ENCODE measurements at regions of chr2 and their contacts with region 1.

Region 1: GRCh38 chr2:223537669-223538601 is 64.2 kb downstream of the SCG2 start:
- DNase-seq: peak; percentile 40 to 68
- H3K4me3 ChIP-seq: no peak overlapping the region
- H3K27ac ChIP-seq: peak overlapping the region; percentile 60
- H3K4me1 ChIP-seq: peaks cover 19% of the 10 kb centered on the region
- H3K27me3 ChIP-seq: no peaks in the 10 kb centered on the region
- CTCF ChIP-seq: no peak

Region 2: GRCh38 chr2:222903234-222904220 is 634.4 kb before region 1 on chr2:
- CTCF ChIA-PET with region 1: no interaction called
- POLR2A ChIA-PET with region 1: interaction called, 11 read pairs
- intact Hi-C with region 1: no loop called
- DNase-seq: peak; percentile 48 to 68
- H3K4me3 ChIP-seq: no peak overlapping the region
- H3K27ac ChIP-seq: 0 out of 2 replicates have a peak overlapping the region, but pooled peaks have one; percentile 7
- H3K4me1 ChIP-seq: peaks cover 29% of the 10 kb centered on the region
- H3K27me3 ChIP-seq: no peaks in the 10 kb centered on the region
- CTCF ChIP-seq: peak; percentile 99

Region 3: DNA sequence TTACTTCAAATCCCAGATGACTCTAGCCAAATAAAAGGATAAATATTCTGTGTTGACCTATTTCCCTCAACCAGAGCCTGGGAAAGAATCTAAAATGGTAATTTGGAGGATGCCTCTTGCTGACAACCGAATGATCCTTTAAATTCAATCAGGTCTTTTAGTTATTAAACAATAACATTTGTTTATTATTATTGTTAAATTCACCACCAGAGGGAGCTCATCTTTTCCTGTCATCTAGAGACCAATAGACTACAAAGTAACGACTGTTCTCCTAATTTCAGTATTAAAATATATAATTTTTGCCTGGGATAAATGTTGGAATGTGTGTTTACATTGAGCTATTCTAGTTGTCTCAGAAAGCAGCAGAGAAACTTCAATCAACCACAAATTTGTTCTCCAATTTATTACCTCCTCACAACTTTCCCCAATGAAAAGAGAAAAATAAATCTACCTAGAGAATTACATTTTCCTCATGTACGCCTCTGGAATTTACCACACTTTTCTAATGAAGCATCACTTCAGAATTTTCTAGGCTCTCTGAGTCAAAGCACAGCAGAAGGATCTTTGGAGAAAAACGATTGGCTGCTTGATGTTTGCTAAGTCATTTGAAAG is 78.5 kb before region 1 on chr2:
- CTCF ChIA-PET with region 1: interaction called, 13 read pairs
- POLR2A ChIA-PET with region 1: interaction called, 3 read pairs
- intact Hi-C with region 1: no loop called
- DNase-seq: no peak
- H3K4me3 ChIP-seq: no peak overlapping the region
- H3K27ac ChIP-seq: no peak overlapping the region
- H3K4me1 ChIP-seq: peaks cover 21% of the 10 kb centered on the region
- H3K27me3 ChIP-seq: no peaks in the 10 kb centered on the region
- CTCF ChIP-seq: peak; percentile 75

Region 4: DNA sequence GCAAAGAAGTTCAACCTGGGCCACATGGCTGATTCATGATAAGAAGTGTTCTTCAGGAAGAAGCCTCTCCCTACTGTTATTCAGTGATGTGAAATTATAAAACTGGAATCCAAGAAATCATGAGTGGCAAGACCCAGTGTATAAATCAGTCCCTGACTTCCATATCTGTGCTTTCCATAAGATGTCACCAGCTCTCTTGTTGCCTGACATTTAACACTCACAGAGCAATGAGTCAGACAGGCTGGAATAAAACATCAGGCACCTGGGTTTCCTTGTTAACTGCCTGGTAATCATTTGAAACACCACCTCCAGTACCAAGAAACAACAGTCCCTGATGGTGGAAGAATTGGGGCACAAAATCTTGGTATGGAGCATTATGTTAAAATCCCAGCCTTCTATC is 11.8 kb before region 1 on chr2:
- CTCF ChIA-PET with region 1: no interaction called
- POLR2A ChIA-PET with region 1: interaction called, 12 read pairs
- intact Hi-C with region 1: no loop called
- DNase-seq: peak; percentile 22 to 65
- H3K4me3 ChIP-seq: no peak overlapping the region
- H3K27ac ChIP-seq: no peak overlapping the region
- H3K4me1 ChIP-seq: peaks cover 9% of the 10 kb centered on the region; the same call in 1 of the 2 replicates
- H3K27me3 ChIP-seq: no peaks in the 10 kb centered on the region
- CTCF ChIP-seq: no peak; the same call in 1 of the 2 replicates

Region 5: GRCh38 chr2:223601932-223602666 is 64.2 kb after region 1 on chr2 and contains the start of gene SCG2:
- CTCF ChIA-PET with region 1: no interaction called
- POLR2A ChIA-PET with region 1: no interaction called
- intact Hi-C with region 1: no loop called
- DNase-seq: peak; percentile 75 to 81
- H3K4me3 ChIP-seq: peak within 1 kb of the TSS; percentile 29; the same call in 1 of the 2 replicates
- H3K27ac ChIP-seq: no peak within 1 kb of the TSS
- H3K4me1 ChIP-seq: peaks cover 19% of the 10 kb centered on the region
- H3K27me3 ChIP-seq: no peaks in the 10 kb centered on the region
- CTCF ChIP-seq: peak; percentile 81
- total RNA-seq, gene SCG2: 0.48 and 0.81 TPM in 2 replicates

Measured in PC-9 (cell line).